Panc1 (cell line): ENCODE measurements at regions of chr7 and their contacts with region 1.

Region 1: GRCh38 chr7:129376076-129376777 is 58.0 kb upstream of the STRIP2 start:
- DNase-seq: peak; percentile 47
- ATAC-seq: peak; percentile 94
- H3K4me3 ChIP-seq: no peak overlapping the region
- H3K27ac ChIP-seq: no peak overlapping the region
- H3K4me1 ChIP-seq: no peaks in the 10 kb centered on the region
- H3K27me3 ChIP-seq: no peaks in the 10 kb centered on the region
- CTCF ChIP-seq: peak; percentile 82

Region 2: DNA sequence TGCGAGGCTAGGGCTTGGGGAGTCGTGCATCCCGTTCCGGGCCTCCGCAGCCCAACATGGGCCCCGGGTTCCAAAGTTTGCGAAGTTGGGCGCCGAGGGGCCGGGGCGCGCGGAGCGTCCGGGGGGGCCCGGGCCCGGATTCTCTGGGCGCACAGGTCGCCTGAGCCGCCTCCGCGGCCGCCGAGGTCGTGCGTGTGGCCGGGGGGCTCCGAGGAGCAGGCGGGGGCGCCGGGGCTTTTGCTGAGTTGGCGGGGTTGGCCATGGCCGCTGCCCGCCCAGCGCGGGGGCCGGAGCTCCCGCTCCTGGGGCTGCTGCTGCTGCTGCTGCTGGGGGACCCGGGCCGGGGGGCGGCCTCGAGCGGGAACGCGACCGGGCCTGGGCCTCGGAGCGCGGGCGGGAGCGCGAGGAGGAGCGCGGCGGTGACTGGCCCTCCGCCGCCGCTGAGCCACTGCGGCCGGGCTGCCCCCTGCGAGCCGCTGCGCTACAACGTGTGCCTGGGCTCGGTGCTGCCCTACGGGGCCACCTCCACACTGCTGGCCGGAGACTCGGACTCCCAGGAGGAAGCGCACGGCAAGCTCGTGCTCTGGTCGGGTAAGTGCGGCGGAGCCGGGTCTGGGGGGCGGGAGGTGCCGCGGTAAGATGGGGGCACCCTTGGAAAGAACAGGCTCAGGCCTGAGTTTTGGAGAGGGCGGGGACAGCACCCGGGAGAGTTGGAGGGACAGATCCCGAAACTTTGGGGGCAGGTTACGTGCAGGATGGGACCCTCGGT is 187.2 kb before region 1 on chr7:
- CTCF ChIA-PET with region 1: no interaction called
- POLR2A ChIA-PET with region 1: no interaction called
- in situ Hi-C with region 1: no loop called
- intact Hi-C with region 1: no loop called
- DNase-seq: no peak
- ATAC-seq: peak; percentile 60; the same call in 1 of the 2 replicates
- H3K4me3 ChIP-seq: peak overlapping the region; percentile 45 to 56
- H3K27ac ChIP-seq: no peak overlapping the region
- H3K4me1 ChIP-seq: no peaks in the 10 kb centered on the region
- H3K27me3 ChIP-seq: peaks cover 14% of the 10 kb centered on the region
- CTCF ChIP-seq: no peak

Region 3: GRCh38 chr7:129351320-129351719 is 24.9 kb before region 1 on chr7:
- CTCF ChIA-PET with region 1: interaction called, 10 read pairs
- POLR2A ChIA-PET with region 1: no interaction called
- in situ Hi-C with region 1: no loop called
- intact Hi-C with region 1: no loop called
- DNase-seq: no peak
- ATAC-seq: no peak
- H3K4me3 ChIP-seq: no peak overlapping the region
- H3K27ac ChIP-seq: no peak overlapping the region
- H3K4me1 ChIP-seq: no peaks in the 10 kb centered on the region
- H3K27me3 ChIP-seq: no peaks in the 10 kb centered on the region
- CTCF ChIP-seq: no peak

Region 4: GRCh38 chr7:129423700-129424618 is 47.7 kb after region 1 on chr7:
- CTCF ChIA-PET with region 1: no interaction called
- POLR2A ChIA-PET with region 1: no interaction called
- in situ Hi-C with region 1: no loop called
- intact Hi-C with region 1: no loop called
- DNase-seq: no peak
- ATAC-seq: no peak
- H3K4me3 ChIP-seq: no peak overlapping the region
- H3K27ac ChIP-seq: no peak overlapping the region
- H3K4me1 ChIP-seq: no peaks in the 10 kb centered on the region
- H3K27me3 ChIP-seq: no peaks in the 10 kb centered on the region
- CTCF ChIP-seq: no peak

Region 5: DNA sequence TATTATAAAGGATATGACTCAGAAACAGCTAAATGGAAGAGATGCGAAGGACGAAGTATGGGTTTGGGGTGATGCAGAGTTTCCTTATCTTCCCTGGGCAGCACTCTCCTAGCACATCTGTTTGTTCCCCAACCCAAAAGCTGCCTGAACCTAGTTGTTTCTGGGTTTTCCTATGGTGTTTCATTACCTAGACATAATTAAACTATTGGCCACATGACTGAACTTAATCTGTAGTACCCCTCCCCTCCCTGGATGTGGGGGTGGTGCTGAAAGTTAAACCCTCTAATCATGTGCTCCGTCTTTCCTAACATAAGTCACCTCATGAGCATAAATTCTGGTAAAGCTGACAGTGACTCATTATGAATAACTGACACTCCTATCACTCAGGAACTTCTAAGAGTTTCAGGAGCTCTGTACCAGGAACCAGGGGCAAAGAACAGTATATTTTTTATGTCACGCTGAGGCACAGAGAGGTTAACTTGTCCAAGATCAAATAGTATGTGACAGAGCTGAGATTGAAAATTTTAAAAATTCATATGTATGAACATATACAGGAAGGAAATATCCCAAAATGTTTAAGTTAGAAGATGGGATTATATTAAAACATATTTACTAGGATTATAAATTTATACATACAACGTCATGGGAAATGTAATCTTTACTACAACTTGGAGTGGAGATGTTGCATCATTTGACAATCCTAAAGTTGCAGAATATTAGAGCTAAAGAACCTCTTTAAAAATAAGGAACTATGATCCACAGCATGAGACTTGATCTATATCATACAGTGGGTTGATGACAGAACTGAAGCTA is 62.8 kb after region 1 on chr7:
- CTCF ChIA-PET with region 1: no interaction called
- POLR2A ChIA-PET with region 1: no interaction called
- in situ Hi-C with region 1: no loop called
- intact Hi-C with region 1: no loop called
- DNase-seq: peak; percentile 95
- ATAC-seq: peak; percentile 15; the same call in 1 of the 2 replicates
- H3K4me3 ChIP-seq: no peak overlapping the region
- H3K27ac ChIP-seq: no peak overlapping the region
- H3K4me1 ChIP-seq: no peaks in the 10 kb centered on the region; the same call in 1 of the 2 replicates
- H3K27me3 ChIP-seq: peaks cover 6% of the 10 kb centered on the region; the same call in 1 of the 2 replicates
- CTCF ChIP-seq: no peak

Region 6: GRCh38 chr7:129676017-129676897 is 300.0 kb after region 1 on chr7:
- CTCF ChIA-PET with region 1: no interaction called
- POLR2A ChIA-PET with region 1: no interaction called
- in situ Hi-C with region 1: no loop called
- intact Hi-C with region 1: no loop called
- DNase-seq: no peak
- ATAC-seq: no peak
- H3K4me3 ChIP-seq: no peak overlapping the region
- H3K27ac ChIP-seq: no peak overlapping the region
- H3K4me1 ChIP-seq: no peaks in the 10 kb centered on the region
- H3K27me3 ChIP-seq: no peaks in the 10 kb centered on the region
- CTCF ChIP-seq: no peak